ENCODE measurements at regions of chr9 and their contacts with region 1.

Region 1: DNA sequence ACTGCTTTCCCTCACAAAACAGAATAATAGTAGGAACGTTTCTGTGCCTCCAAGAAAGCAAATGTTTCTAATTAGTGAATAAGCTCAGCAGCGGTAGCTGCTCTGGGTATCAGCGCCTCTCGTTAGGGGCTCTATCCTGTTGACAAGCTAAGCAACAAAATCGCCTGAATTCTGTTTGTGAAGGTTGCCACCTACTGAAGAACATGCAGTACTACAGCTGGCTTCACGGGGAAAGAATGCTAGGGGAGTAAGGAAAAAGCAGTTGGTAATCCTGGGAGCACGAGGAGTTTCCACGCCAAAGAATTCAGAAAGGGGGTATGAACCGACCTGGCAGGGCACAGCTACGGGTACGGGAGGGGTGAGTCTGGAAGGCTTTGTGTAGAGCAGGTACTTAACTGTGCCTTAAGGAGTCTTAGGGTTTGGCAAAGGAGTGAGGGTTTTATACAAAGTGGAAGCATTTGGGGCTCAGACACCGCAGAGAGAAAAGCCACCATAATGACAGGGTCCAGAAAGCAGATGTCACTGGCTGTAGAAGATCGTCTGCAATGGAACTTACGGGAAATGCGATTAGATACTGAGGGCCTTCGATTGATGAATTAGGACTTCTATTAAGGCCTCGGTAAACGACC is 171.7 kb downstream of the TTC39B start:
- DNase-seq: no peak
- ATAC-seq: peak; percentile 89
- H3K4me3 ChIP-seq: no peak overlapping the region
- H3K27ac ChIP-seq: no peak overlapping the region
- H3K4me1 ChIP-seq: no peaks in the 10 kb centered on the region
- H3K27me3 ChIP-seq: no peaks in the 10 kb centered on the region
- CTCF ChIP-seq: peak; percentile 65 to 85 (median 84)
- EP300 ChIP-seq: no peak
- POLR2A ChIP-seq: no peak
- RAD21 ChIP-seq: peak; percentile 71

Region 2: DNA sequence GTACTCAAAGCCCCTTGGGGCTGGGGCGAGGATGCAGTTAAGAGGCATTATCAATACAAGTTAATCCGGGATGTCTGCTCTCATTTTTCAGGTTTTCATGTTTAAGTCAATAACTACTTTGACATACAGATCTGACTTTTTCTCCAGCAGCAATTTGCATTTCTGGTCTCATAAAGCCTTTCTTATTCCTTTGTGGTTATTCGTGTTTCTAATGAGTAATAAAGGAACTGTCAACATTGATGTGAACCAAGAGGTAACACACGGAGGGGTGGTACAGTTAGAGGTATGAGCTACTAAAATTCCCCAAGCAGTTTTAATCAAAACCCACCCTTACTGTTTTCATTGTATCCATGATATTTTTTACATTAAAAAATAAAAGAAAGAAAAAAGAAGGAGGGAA is 683.3 kb before region 1 on chr9:
- CTCF ChIA-PET with region 1: no interaction called
- POLR2A ChIA-PET with region 1: no interaction called
- RAD21 ChIA-PET with region 1: no interaction called
- SMC1A ChIA-PET with region 1: no interaction called
- in situ Hi-C with region 1: loop called (anchors 25 kb)
- intact Hi-C with region 1: no loop called
- DNase-seq: no peak
- ATAC-seq: peak; percentile 52; the same call in 2 of the 3 replicates
- H3K4me3 ChIP-seq: no peak overlapping the region
- H3K27ac ChIP-seq: no peak overlapping the region
- H3K4me1 ChIP-seq: no peaks in the 10 kb centered on the region
- H3K27me3 ChIP-seq: peaks cover 0 to 2% of the 10 kb centered on the region in 2 experiments; a peak in 1 of 4 replicates
- CTCF ChIP-seq: no peak
- EP300 ChIP-seq: no peak
- POLR2A ChIP-seq: no peak
- RAD21 ChIP-seq: no peak

Region 3: DNA sequence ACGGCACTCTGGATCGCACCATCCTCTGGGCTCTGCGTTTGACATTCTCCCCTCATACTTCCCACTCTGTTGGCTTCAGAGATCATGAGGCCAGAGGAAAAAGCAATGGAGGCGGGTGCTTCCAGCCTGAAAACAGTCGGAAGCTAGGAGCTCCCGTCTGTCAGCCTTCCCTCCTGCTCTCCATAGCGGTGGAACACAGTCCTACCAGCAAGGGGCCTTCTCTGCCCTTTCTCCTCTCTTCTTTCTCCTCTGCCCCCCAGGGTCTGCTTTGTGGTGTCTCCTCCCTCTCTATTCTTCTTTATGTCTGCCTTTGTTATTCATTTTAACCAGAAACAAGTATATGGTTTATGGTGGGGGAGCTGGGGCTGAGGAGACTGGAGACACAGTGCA is 668.9 kb before region 1 on chr9:
- CTCF ChIA-PET with region 1: interaction called, 4 read pairs
- POLR2A ChIA-PET with region 1: no interaction called
- RAD21 ChIA-PET with region 1: no interaction called
- SMC1A ChIA-PET with region 1: no interaction called
- in situ Hi-C with region 1: loop called (anchors 25 kb)
- intact Hi-C with region 1: loop called (anchors 10 kb)
- DNase-seq: no peak
- ATAC-seq: no peak
- H3K4me3 ChIP-seq: no peak overlapping the region
- H3K27ac ChIP-seq: no peak overlapping the region
- H3K4me1 ChIP-seq: no peaks in the 10 kb centered on the region
- H3K27me3 ChIP-seq: no peaks in the 10 kb centered on the region; a peak in 1 of 4 replicates
- CTCF ChIP-seq: no peak
- EP300 ChIP-seq: no peak
- POLR2A ChIP-seq: no peak
- RAD21 ChIP-seq: no peak

Region 4: DNA sequence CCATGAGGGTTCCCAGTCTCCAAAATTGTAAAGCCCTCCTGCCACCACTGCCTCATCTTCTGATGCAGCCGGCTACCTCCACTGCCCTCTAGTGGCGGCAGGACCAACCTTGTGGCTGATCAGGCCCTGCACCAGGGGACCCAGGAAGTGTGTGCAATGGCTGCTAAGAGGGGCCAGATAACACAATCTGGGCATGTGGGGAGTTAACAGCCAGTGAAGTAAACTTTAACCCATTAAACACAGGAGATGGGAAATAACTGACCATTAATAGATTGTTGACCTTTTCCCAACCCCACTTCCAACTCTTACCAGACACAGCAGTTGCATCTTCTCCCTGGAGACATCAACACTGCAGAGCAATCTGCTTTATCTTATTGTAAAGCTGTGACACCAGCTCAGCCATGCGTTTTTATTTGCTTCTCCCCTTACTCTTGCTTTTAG is 288.4 kb before region 1 on chr9:
- CTCF ChIA-PET with region 1: no interaction called
- POLR2A ChIA-PET with region 1: no interaction called
- RAD21 ChIA-PET with region 1: no interaction called
- SMC1A ChIA-PET with region 1: no interaction called
- in situ Hi-C with region 1: no loop called
- intact Hi-C with region 1: loop called (anchors 10 kb)
- DNase-seq: no peak
- ATAC-seq: peak; percentile 100
- H3K4me3 ChIP-seq: no peak overlapping the region
- H3K27ac ChIP-seq: no peak overlapping the region
- H3K4me1 ChIP-seq: no peaks in the 10 kb centered on the region
- H3K27me3 ChIP-seq: peaks cover 0 to 2% of the 10 kb centered on the region in 2 experiments; a peak in 1 of 4 replicates
- CTCF ChIP-seq: peak; percentile 69 to 91 (median 87)
- EP300 ChIP-seq: no peak
- POLR2A ChIP-seq: no peak
- RAD21 ChIP-seq: peak; percentile 47

Region 5: DNA sequence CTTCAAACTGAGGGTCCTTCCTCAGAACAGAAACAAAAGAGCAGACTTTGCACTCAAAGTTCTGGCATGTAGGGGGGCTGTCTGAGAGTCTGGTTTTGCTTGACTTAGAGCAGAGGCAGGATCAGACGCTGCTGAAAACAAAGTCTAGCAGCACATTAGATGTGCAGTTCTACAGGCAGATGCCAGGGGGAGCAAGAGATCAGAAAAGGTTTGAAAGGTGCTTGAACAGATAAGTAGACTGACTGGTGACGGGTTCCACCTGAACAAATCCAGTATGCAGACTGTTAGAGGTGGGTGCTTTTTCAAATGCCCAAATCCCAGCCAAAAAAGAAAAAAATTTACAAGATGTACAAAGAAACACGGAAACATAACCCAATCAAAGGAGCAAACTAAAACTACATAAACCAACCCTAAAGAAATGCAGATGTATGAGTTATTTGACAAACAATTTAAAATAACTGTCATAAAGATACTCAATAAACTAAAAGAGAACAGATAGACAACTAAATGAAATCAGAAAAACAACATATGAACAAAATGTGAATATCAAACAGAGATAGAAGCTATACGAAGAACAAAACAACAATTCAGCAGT is 30.4 kb before region 1 on chr9:
- CTCF ChIA-PET with region 1: interaction called, 39 read pairs
- POLR2A ChIA-PET with region 1: no interaction called
- RAD21 ChIA-PET with region 1: interaction called, 4 read pairs
- SMC1A ChIA-PET with region 1: interaction called, 18 read pairs
- in situ Hi-C with region 1: no loop called
- intact Hi-C with region 1: loop called (anchors 1 kb)
- DNase-seq: no peak
- ATAC-seq: peak; percentile 86
- H3K4me3 ChIP-seq: no peak overlapping the region
- H3K27ac ChIP-seq: no peak overlapping the region
- H3K4me1 ChIP-seq: no peaks in the 10 kb centered on the region
- H3K27me3 ChIP-seq: no peaks in the 10 kb centered on the region
- CTCF ChIP-seq: peak; percentile 59 to 78 (median 67)
- EP300 ChIP-seq: no peak
- POLR2A ChIP-seq: no peak
- RAD21 ChIP-seq: peak; percentile 59

Region 6: DNA sequence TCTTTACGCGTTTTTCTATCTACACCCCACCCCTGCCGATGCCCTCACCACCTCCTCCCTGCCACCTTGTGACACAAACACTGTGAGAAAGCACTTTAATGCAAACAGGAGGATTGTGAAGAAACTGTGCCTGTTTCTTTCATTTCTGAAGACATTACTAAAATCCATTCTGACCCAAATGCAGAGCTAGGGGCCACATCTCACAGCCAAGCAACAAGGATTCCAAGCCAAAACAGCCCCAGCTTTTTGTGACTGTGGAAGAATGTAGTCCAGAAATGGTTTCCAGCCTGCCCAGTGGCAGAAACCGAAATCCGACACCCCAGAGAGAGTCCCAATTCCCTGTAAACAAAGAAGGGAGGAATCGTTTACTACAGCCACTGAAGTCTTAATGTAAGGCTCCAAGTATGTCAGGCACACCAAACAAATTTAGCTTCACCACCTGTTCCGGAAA is 19.1 kb before region 1 on chr9:
- CTCF ChIA-PET with region 1: interaction called, 17 read pairs
- POLR2A ChIA-PET with region 1: no interaction called
- RAD21 ChIA-PET with region 1: no interaction called
- SMC1A ChIA-PET with region 1: no interaction called
- in situ Hi-C with region 1: no loop called
- intact Hi-C with region 1: no loop called
- DNase-seq: no peak
- ATAC-seq: no peak
- H3K4me3 ChIP-seq: no peak overlapping the region
- H3K27ac ChIP-seq: no peak overlapping the region
- H3K4me1 ChIP-seq: no peaks in the 10 kb centered on the region
- H3K27me3 ChIP-seq: no peaks in the 10 kb centered on the region
- CTCF ChIP-seq: no peak
- EP300 ChIP-seq: no peak
- POLR2A ChIP-seq: no peak
- RAD21 ChIP-seq: no peak

Measured in GM12878 (cell line).